Left ventricle myocardium superior (tissue), 1 donor: ENCODE measurements at regions of chr2 and their contacts with region 1.

Region 1: DNA sequence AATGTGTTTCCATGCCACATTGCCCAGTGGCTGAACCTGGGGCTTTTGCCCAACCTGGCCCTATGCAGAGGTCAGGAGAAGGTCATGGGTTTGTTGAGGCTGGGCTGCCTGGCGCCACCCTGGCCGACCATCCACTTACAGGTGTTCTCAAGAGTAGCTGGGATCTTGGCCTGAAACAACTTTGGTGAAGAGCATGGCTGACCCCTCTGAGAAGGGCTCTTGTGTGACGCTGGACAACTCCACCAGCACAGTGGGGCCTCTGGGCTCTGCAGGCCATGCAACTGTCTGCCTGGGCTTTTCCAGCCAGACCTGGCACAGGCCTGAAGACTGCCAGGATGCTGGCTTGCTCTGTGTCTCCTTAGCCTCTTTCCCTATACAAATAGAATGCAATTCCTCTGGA is 76.4 kb upstream of the ZNG1B start:
- DNase-seq: no peak
- ATAC-seq: no peak

Region 2: DNA sequence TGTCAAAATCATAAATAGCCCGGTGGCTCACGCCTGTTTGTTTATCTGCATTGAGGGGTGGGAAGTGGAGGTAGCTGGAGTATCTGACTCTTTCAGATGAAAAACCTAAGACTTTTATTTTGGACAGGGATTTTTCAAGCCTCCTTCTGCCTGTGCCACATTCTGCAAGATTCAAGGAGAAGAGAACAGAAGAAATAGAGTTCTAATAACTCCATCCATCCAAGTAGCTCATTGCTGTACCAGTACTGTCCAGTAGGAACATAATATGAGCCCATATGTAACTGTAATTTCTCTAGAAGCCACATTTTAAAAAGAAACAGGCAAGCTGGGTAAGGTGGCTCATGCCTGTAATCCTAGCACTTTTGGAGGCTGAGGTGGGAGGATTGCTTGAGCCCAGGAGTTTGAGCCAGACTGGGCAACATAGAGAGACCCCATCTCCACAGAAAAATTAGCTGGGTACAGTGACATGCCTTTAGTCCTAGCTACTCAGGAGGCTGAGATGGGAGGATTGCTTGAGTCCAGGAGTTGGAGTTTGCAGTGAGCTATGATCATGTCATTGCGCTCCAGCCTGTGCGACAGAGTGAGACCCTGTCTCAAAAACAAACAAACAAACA is 675.7 kb before region 1 on chr2:
- intact Hi-C with region 1: no loop called
- DNase-seq: no peak
- ATAC-seq: no peak

Region 3: GRCh38 chr2:112706170-112706664 is 654.8 kb before region 1 on chr2:
- intact Hi-C with region 1: no loop called
- DNase-seq: no peak
- ATAC-seq: no peak

Region 4: GRCh38 chr2:113248997-113249770 is 111.9 kb before region 1 on chr2:
- intact Hi-C with region 1: loop called (anchors 10 kb)
- DNase-seq: peak; percentile 85
- ATAC-seq: peak; percentile 76